Caco-2 (cell line): ENCODE measurements at regions of chr21 and their contacts with region 1.

Region 1: GRCh38 chr21:36319765-36320420 is at the start of gene MORC3:
- DNase-seq: peak; percentile 98
- H3K4me3 ChIP-seq: peak within 1 kb of the TSS; percentile 51
- H3K4me3 Mint-ChIP-seq: peak within 1 kb of the TSS; percentile 73
- H3K27ac Mint-ChIP-seq: peak within 1 kb of the TSS; percentile 75
- H3K4me1 ChIP-seq: peaks cover 4% of the 10 kb centered on the region; the same call in 1 of the 2 replicates
- H3K4me1 Mint-ChIP-seq: peaks cover 22% of the 10 kb centered on the region
- H3K27me3 ChIP-seq: no peaks in the 10 kb centered on the region
- H3K27me3 Mint-ChIP-seq: no peaks in the 10 kb centered on the region
- CTCF ChIP-seq: no peak
- total RNA-seq, gene MORC3: 21.6 and 23.3 TPM in 2 replicates

Region 2: DNA sequence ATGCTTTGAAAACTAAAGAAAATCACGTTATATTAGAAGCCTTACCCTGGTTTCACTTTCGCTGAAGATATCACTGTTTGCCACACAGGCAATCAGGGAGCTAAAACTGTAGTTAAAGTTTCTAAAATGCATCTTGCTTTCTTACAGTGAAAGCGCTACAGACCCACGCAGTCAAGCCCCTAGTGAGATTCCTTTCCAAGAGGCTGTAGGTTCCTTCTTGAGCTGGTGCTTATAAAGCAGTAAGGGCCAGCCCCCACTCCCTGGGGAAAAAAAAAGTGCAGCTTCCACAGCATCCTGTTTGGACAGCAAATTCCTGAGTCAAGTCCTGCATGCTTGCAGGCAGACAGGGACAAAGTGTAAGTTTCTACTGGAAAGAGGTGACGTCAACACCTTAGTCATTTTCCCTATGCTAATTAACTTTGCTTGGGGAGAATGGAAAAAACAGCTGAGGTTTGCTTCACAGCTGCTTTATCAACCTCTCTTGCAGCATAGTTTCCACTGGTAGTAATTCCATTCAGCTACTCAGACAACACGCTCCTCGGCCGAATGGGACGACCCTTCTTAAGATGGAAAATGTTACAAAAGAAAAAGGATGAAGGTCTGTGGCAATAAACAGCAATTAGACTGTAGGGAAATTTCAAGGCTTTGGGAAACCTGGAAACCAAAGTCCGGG is 1793.1 kb before region 1 on chr21:
- CTCF ChIA-PET with region 1: no interaction called
- POLR2A ChIA-PET with region 1: interaction called, 10 read pairs
- intact Hi-C with region 1: no loop called
- DNase-seq: peak; percentile 91 to 96
- H3K4me3 ChIP-seq: peak overlapping the region; percentile 29
- H3K4me3 Mint-ChIP-seq: peak overlapping the region; percentile 78
- H3K27ac Mint-ChIP-seq: peak overlapping the region; percentile 91
- H3K4me1 ChIP-seq: peaks cover 33% of the 10 kb centered on the region
- H3K4me1 Mint-ChIP-seq: peaks cover 18% of the 10 kb centered on the region
- H3K27me3 ChIP-seq: no peaks in the 10 kb centered on the region
- H3K27me3 Mint-ChIP-seq: no peaks in the 10 kb centered on the region
- CTCF ChIP-seq: no peak

Region 3: DNA sequence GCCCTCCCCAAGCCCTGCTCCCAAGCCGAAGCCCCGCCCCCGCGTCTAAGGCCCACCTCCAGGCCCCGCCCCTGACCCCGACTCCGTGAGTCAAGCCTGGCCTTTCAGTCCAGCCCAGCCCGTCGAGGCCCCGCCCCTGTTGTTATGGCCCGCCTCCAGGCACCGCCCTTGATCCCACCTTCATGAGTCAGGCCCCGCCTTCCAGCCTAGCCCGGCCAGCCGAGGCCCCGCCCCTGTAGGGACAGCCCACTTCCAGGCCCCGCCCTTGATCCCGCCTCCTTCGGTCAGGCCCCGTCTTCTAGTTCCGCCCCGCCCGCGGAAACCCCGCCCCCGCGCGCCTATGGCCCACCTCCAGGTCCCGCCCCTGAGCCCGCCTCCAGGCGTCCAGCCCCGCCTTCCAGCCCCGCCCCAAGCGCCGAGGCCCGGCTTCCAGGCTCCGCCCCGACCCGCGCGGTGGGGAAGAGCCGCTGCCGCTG is 163.5 kb before region 1 on chr21:
- CTCF ChIA-PET with region 1: interaction called, 6 read pairs
- POLR2A ChIA-PET with region 1: interaction called, 31 read pairs
- intact Hi-C with region 1: loop called (anchors 2 kb)
- DNase-seq: peak; percentile 98 to 99
- H3K4me3 ChIP-seq: peak overlapping the region; percentile 89
- H3K4me3 Mint-ChIP-seq: peak overlapping the region; percentile 83
- H3K27ac Mint-ChIP-seq: peak overlapping the region; percentile 84
- H3K4me1 ChIP-seq: peaks cover 5% of the 10 kb centered on the region
- H3K4me1 Mint-ChIP-seq: peaks cover 20% of the 10 kb centered on the region
- H3K27me3 ChIP-seq: no peaks in the 10 kb centered on the region
- H3K27me3 Mint-ChIP-seq: no peaks in the 10 kb centered on the region
- CTCF ChIP-seq: no peak

Region 4: DNA sequence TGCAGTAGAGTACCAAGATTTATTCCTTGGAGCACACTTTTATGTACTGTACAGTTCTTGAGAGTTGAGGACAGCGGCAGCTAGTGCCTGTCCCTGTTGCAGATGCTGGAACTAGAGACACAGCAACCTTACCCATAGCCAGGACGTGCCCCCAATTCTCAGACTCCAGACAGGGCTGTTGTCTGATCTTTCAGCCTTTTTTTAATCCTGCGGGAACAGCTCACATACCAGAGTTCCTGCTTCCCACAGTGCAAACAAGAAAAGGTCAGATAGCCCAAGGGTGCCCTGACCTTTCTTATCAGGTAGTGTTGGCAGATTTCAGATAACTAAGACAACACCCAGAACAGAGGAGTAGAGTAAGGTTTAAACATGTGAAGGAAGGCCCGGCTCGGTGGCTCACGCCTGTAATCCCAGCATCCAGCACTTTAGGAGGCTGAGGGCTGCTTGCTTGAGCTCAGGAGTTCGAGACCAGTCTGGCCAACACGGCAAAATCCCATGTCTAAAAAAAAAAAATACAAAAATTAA is 84.8 kb before region 1 on chr21:
- CTCF ChIA-PET with region 1: no interaction called
- POLR2A ChIA-PET with region 1: interaction called, 19 read pairs
- intact Hi-C with region 1: loop called (anchors 5 kb)
- DNase-seq: peak; percentile 87 to 93
- H3K4me3 ChIP-seq: no peak overlapping the region
- H3K4me3 Mint-ChIP-seq: peak overlapping the region; percentile 35
- H3K27ac Mint-ChIP-seq: peak overlapping the region; percentile 79
- H3K4me1 ChIP-seq: peaks cover 23% of the 10 kb centered on the region
- H3K4me1 Mint-ChIP-seq: peaks cover 23% of the 10 kb centered on the region
- H3K27me3 ChIP-seq: no peaks in the 10 kb centered on the region
- H3K27me3 Mint-ChIP-seq: no peaks in the 10 kb centered on the region
- CTCF ChIP-seq: no peak

Region 5: GRCh38 chr21:36263797-36264196 is 56.1 kb before region 1 on chr21:
- CTCF ChIA-PET with region 1: no interaction called
- POLR2A ChIA-PET with region 1: no interaction called
- intact Hi-C with region 1: loop called (anchors 5 kb)
- DNase-seq: no peak
- H3K4me3 ChIP-seq: no peak overlapping the region
- H3K4me3 Mint-ChIP-seq: no peak overlapping the region
- H3K27ac Mint-ChIP-seq: no peak overlapping the region
- H3K4me1 ChIP-seq: peaks cover 28% of the 10 kb centered on the region
- H3K4me1 Mint-ChIP-seq: peaks cover 7% of the 10 kb centered on the region
- H3K27me3 ChIP-seq: no peaks in the 10 kb centered on the region
- H3K27me3 Mint-ChIP-seq: no peaks in the 10 kb centered on the region
- CTCF ChIP-seq: no peak

Region 6: GRCh38 chr21:36989699-36990507 is 670.0 kb after region 1 on chr21:
- CTCF ChIA-PET with region 1: no interaction called
- POLR2A ChIA-PET with region 1: interaction called, 12 read pairs
- intact Hi-C with region 1: no loop called
- DNase-seq: peak; percentile 92 to 95
- H3K4me3 ChIP-seq: peak overlapping the region; percentile 46
- H3K4me3 Mint-ChIP-seq: peak overlapping the region; percentile 96
- H3K27ac Mint-ChIP-seq: peak overlapping the region; percentile 96
- H3K4me1 ChIP-seq: peaks cover 15% of the 10 kb centered on the region
- H3K4me1 Mint-ChIP-seq: peaks cover 12% of the 10 kb centered on the region
- H3K27me3 ChIP-seq: no peaks in the 10 kb centered on the region
- H3K27me3 Mint-ChIP-seq: no peaks in the 10 kb centered on the region
- CTCF ChIP-seq: peak in 1 of 2 experiments; percentile 68